Activated naive CD4-positive, alpha-beta T cell treated with anti-CD3 and anti-CD28 coated beads for 36 hours (primary cell): ENCODE measurements at regions of chr4 and their contacts with region 1.

Region 1: GRCh38 chr4:80184053-80184790 is 13.1 kb upstream of the PRDM8 start:
- DNase-seq: peak; percentile 90
- H3K4me3 Mint-ChIP-seq: peak overlapping the region; percentile 97
- H3K27ac Mint-ChIP-seq: peak overlapping the region; percentile 70
- H3K4me1 Mint-ChIP-seq: peaks cover 46% of the 10 kb centered on the region
- H3K27me3 Mint-ChIP-seq: peaks cover 11% of the 10 kb centered on the region

Region 2: DNA sequence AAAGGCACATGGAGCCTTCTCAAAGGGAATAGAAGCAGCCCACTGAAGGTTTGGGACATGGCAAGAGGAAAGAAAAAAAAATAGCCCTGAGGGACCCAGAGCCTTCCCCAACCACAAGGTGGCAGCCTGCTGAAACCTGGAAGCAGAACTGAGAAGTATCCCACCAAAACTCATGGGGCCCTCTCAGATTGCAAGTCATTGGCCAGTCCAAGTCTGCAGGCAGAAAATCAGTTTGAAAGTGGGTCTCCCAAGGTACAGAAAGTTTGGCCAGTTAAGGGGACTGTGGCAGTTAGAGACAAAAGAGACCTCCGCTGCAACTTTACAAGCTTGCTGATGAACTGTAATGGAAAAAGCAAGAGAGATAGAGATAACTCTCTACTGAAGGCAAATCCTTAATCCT is 267.0 kb before region 1 on chr4:
- CTCF ChIA-PET with region 1: interaction called, 9 read pairs
- intact Hi-C with region 1: loop called (anchors 1 kb)
- DNase-seq: peak; percentile 67
- H3K4me3 Mint-ChIP-seq: no peak overlapping the region
- H3K27ac Mint-ChIP-seq: no peak overlapping the region
- H3K4me1 Mint-ChIP-seq: peaks cover 2% of the 10 kb centered on the region
- H3K27me3 Mint-ChIP-seq: no peaks in the 10 kb centered on the region

Region 3: DNA sequence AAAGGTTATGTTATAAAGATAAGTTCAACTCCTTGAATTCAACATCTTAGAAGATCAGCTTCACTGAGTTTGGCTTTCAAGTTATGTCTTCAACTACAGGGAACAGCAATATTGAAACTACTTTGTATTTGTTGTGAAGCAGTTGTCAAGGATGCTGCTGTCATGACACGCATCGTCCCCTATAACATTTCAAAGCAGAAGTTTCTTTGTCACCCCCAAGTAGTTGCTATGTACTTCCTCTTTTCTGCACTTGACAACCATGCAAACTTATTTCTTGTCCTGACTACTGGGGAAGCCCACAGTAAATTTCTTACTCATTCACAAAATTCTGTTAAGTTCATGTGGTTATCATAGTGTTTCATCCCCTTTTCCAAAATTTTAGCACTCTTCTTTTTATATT is 125.5 kb before region 1 on chr4:
- CTCF ChIA-PET with region 1: no interaction called
- intact Hi-C with region 1: loop called (anchors 1 kb)
- DNase-seq: peak; percentile 67
- H3K4me3 Mint-ChIP-seq: peak overlapping the region; percentile 71
- H3K27ac Mint-ChIP-seq: peak overlapping the region; percentile 86
- H3K4me1 Mint-ChIP-seq: peaks cover 42% of the 10 kb centered on the region
- H3K27me3 Mint-ChIP-seq: no peaks in the 10 kb centered on the region

Region 4: DNA sequence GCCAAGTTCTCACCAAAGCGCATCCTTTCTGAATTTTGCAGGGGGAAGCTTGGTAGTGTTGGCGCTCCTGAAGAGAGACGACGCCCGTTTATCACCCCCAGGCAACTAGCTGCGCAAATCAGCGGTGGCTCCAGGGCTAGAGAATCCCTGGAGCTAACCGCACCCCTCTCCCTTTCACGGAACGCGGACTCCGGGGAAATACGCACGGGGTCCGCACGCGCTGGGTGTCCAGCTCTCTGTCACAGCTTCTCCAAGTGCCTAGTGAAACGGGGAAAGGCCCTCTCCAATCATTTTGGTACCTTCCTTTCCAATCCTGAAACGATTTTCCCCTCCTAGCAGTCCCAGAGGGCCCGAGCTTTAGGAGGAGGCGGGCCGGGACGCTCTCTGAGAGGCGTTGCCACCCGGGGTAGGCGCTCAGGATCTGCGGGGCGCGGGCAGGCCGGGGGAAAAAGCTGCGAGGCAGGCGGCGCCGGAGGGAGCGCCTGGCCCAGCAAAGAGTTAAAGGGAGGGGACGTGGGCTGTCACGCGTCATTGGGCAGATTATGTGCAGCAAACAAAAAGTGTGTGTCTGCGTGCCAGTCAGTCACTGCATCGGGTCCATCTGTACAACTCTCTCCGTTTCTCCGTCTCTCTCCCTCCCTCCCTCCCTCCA is 12.8 kb after region 1 on chr4 and contains the start of gene PRDM8:
- CTCF ChIA-PET with region 1: interaction called, 36 read pairs
- intact Hi-C with region 1: loop called (anchors 1 kb)
- DNase-seq: peak; percentile 42
- H3K4me3 Mint-ChIP-seq: peak within 1 kb of the TSS; percentile 55
- H3K27ac Mint-ChIP-seq: no peak within 1 kb of the TSS
- H3K4me1 Mint-ChIP-seq: peaks cover 19% of the 10 kb centered on the region
- H3K27me3 Mint-ChIP-seq: peaks cover 46% of the 10 kb centered on the region
- total RNA-seq, gene PRDM8: 0.29 to 0.35 TPM

Region 5: GRCh38 chr4:80215449-80216052 is 31.3 kb after region 1 on chr4:
- CTCF ChIA-PET with region 1: interaction called, 9 read pairs
- intact Hi-C with region 1: loop called (anchors 1 kb)
- DNase-seq: no peak
- H3K4me3 Mint-ChIP-seq: no peak overlapping the region
- H3K27ac Mint-ChIP-seq: no peak overlapping the region
- H3K4me1 Mint-ChIP-seq: peaks cover 1% of the 10 kb centered on the region
- H3K27me3 Mint-ChIP-seq: peaks cover 9% of the 10 kb centered on the region